AG04450 (cell line): ENCODE measurements at regions of chr10 and their contacts with region 1.

Region 1: GRCh38 chr10:77220150-77220549 is 417.5 kb downstream of the KCNMA1 start:
- DNase-seq: no peak
- H3K4me3 ChIP-seq: no peak overlapping the region
- H3K27ac ChIP-seq: no peak overlapping the region
- H3K27me3 ChIP-seq: no peaks in the 10 kb centered on the region
- CTCF ChIP-seq: no peak

Region 2: GRCh38 chr10:77320971-77321471 is 100.9 kb after region 1 on chr10:
- CTCF ChIA-PET with region 1: interaction called, 13 read pairs
- POLR2A ChIA-PET with region 1: no interaction called
- DNase-seq: peak; percentile 93
- H3K4me3 ChIP-seq: no peak overlapping the region
- H3K27ac ChIP-seq: peak overlapping the region; percentile 72
- H3K27me3 ChIP-seq: no peaks in the 10 kb centered on the region
- CTCF ChIP-seq: no peak

Region 3: DNA sequence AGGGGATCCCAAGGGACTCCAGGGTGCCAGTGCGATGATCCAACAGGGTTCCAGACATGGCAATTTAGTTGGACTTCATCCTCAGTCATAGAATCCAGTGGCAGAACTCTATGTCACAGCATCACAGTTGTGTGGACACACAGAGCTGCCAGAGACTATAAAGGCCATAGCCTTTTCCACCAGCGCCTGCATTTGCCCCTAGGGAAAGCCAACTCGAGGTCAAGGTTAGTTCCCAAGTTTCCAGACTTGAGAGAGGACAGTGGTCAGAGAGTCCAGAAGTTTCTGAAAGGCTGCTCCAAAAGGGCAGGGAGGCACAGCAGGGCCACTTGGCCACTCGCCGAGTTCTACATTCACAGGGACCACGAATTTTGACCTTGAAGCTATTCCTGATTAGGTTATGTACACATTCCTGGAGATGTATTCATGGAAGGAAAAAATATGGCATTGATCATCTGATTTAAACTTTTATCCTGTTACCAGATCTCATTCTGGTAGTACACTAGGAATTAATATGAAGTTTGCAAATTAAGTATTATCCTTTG is 247.3 kb after region 1 on chr10:
- CTCF ChIA-PET with region 1: no interaction called
- POLR2A ChIA-PET with region 1: no interaction called
- DNase-seq: no peak
- H3K4me3 ChIP-seq: no peak overlapping the region
- H3K27ac ChIP-seq: no peak overlapping the region
- H3K27me3 ChIP-seq: no peaks in the 10 kb centered on the region
- CTCF ChIP-seq: no peak

Region 4: GRCh38 chr10:77746047-77746707 is 526.0 kb after region 1 on chr10:
- CTCF ChIA-PET with region 1: no interaction called
- POLR2A ChIA-PET with region 1: no interaction called
- DNase-seq: no peak
- H3K4me3 ChIP-seq: no peak overlapping the region
- H3K27ac ChIP-seq: no peak overlapping the region
- H3K27me3 ChIP-seq: no peaks in the 10 kb centered on the region
- CTCF ChIP-seq: no peak